Activated CD4-positive, alpha-beta T cell treated with anti-CD3 and anti-CD28 coated beads for 36 hours (primary cell): ENCODE measurements at regions of chr15 and their contacts with region 1.

Region 1: GRCh38 chr15:64622410-64623260 is 152.8 kb downstream of the RBPMS2 start:
- DNase-seq: peak; percentile 57
- ATAC-seq: peak; percentile 53
- H3K4me3 Mint-ChIP-seq: peak overlapping the region; percentile 27
- H3K27ac Mint-ChIP-seq: peak overlapping the region; percentile 93
- H3K4me1 Mint-ChIP-seq: peaks cover 91% of the 10 kb centered on the region
- H3K27me3 Mint-ChIP-seq: no peaks in the 10 kb centered on the region

Region 2: GRCh38 chr15:64197425-64197824 is 425.2 kb before region 1 on chr15:
- CTCF ChIA-PET with region 1: no interaction called
- POLR2A ChIA-PET with region 1: no interaction called
- intact Hi-C with region 1: no loop called
- DNase-seq: no peak
- ATAC-seq: no peak
- H3K4me3 Mint-ChIP-seq: no peak overlapping the region
- H3K27ac Mint-ChIP-seq: no peak overlapping the region
- H3K4me1 Mint-ChIP-seq: no peaks in the 10 kb centered on the region
- H3K27me3 Mint-ChIP-seq: no peaks in the 10 kb centered on the region

Region 3: GRCh38 chr15:64634576-64635498 is 12.2 kb after region 1 on chr15:
- CTCF ChIA-PET with region 1: interaction called, 3 read pairs
- POLR2A ChIA-PET with region 1: no interaction called
- intact Hi-C with region 1: loop called (anchors 1 kb)
- DNase-seq: peak; percentile 56
- ATAC-seq: peak; percentile 65
- H3K4me3 Mint-ChIP-seq: peak overlapping the region; percentile 2
- H3K27ac Mint-ChIP-seq: peak overlapping the region; percentile 74
- H3K4me1 Mint-ChIP-seq: peaks cover 61% of the 10 kb centered on the region
- H3K27me3 Mint-ChIP-seq: no peaks in the 10 kb centered on the region